Mammary epithelial cell (primary cell): ENCODE measurements at regions of chr16 and their contacts with region 1.

Region 1: GRCh38 chr16:22977294-22977697 is 163.3 kb downstream of the HS3ST2 start:
- DNase-seq: peak; percentile 8
- H3K4me3 ChIP-seq: no peak overlapping the region
- H3K27ac ChIP-seq: no peak overlapping the region
- H3K4me1 ChIP-seq: no peaks in the 10 kb centered on the region
- H3K27me3 ChIP-seq: no peaks in the 10 kb centered on the region
- CTCF ChIP-seq: peak; percentile 40 to 58

Region 2: DNA sequence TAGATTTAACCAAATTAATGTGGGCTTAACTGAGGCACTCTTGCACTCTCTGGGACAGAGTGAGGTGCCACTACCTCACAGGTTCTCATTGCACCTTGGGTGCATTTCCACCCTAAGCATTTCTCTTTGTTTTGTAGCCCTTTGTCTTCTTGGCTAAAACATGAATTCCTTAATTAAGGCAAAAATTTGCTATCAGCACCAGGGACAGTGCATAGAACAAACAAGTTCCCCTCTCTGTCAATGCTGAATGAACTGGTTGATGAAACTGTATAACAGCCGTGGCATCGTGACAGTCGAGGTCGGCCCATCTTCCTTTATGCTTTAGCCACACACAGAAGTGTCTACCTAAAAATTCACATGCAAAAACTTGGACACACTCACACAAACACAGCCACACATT is 88.5 kb before region 1 on chr16:
- CTCF ChIA-PET with region 1: no interaction called
- dilution Hi-C with region 1: no loop called
- in situ Hi-C with region 1: no loop called
- intact Hi-C with region 1: no loop called
- DNase-seq: no peak
- H3K4me3 ChIP-seq: no peak overlapping the region
- H3K27ac ChIP-seq: no peak overlapping the region
- H3K4me1 ChIP-seq: no peaks in the 10 kb centered on the region
- H3K27me3 ChIP-seq: no peaks in the 10 kb centered on the region
- CTCF ChIP-seq: no peak

Region 3: DNA sequence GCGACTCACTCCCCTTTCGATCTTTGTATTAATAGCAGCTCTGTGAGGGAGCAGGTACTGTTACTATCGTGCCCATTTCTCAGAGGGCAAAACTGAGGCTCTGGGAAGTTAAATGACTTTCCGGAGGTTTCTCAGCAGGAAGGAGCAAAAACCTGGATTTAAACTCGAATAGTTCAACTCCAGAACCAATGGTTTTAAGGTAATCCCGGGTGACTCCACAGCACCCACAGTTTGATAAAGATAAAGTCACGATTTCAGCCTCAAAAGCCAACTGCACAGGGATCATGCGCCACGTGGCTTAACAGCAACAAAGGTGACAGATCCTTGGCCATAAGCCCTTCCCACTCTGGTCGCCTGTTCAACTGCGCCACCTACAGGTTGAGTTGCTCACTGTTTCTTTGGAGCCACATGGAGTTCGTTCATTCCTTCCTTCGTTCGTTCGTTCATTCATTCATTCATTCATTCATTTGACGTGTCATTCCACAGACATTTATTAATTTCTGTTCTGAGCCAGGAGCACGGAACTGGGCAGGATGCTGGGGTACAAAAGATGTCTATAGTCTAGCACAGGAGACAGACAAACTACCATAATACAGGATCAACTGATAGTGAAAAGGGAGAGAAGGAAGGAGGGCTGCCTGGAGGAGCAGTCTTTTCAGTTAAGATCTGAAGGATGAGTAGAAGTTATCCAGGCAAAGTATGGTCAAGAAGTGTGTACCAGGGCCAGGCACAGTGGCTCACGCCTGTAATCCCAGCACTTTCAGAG is 28.5 kb before region 1 on chr16:
- CTCF ChIA-PET with region 1: no interaction called
- dilution Hi-C with region 1: no loop called
- in situ Hi-C with region 1: no loop called
- intact Hi-C with region 1: loop called (anchors 1 kb)
- DNase-seq: peak; percentile 73
- H3K4me3 ChIP-seq: no peak overlapping the region
- H3K27ac ChIP-seq: no peak overlapping the region
- H3K4me1 ChIP-seq: peaks cover 8% of the 10 kb centered on the region
- H3K27me3 ChIP-seq: no peaks in the 10 kb centered on the region
- CTCF ChIP-seq: peak; percentile 84 to 90

Region 4: DNA sequence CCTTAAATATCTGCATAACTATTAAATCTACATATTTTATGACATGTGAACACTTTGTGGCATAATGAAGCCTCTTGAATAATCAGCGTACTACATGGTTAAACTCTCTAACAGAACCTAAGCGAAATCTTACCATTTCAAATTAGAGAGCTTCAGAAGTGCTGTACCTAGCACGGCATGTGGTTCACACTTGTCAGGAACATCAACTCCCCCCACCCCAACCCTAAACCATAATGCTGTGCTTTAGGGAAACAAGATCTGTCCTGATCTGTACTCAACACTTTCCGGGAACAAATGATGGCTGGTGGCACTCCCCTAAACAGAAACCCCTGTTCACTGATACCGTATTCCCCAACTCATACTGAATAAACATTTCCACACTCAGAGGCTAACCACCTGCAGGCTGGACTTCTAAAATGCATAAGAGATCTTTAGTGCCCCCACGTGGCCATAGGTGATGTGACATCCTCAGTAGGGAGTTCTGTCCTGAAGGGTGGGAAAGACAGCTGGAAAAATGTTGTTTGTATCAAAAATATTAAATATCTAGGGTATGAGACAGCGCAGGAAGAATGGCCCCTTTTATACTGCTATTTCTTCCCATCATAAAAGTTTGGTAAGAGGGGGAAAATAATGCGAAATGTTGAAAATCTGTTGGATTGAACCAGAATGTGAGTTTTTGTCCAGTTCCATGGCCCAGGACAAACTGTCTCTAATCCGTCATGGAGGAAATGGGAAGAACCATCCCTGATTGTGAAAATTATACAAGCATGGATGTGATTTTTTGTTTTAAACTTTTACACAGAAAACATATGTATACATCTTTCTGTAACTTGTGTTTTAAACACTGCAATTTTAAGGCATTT is 83.4 kb after region 1 on chr16:
- CTCF ChIA-PET with region 1: no interaction called
- dilution Hi-C with region 1: no loop called
- in situ Hi-C with region 1: no loop called
- intact Hi-C with region 1: loop called (anchors 2 kb)
- DNase-seq: peak; percentile 57
- H3K4me3 ChIP-seq: no peak overlapping the region
- H3K27ac ChIP-seq: no peak overlapping the region
- H3K4me1 ChIP-seq: peaks cover 7% of the 10 kb centered on the region
- H3K27me3 ChIP-seq: no peaks in the 10 kb centered on the region
- CTCF ChIP-seq: peak; percentile 83 to 90

Region 5: GRCh38 chr16:23124315-23124714 is 147.0 kb after region 1 on chr16:
- CTCF ChIA-PET with region 1: no interaction called
- dilution Hi-C with region 1: no loop called
- in situ Hi-C with region 1: no loop called
- intact Hi-C with region 1: no loop called
- DNase-seq: peak; percentile 91
- H3K4me3 ChIP-seq: no peak overlapping the region
- H3K27ac ChIP-seq: peak overlapping the region; percentile 67
- H3K4me1 ChIP-seq: peaks cover 47% of the 10 kb centered on the region
- H3K27me3 ChIP-seq: no peaks in the 10 kb centered on the region
- CTCF ChIP-seq: no peak